ENCODE measurements at regions of chr4 and their contacts with region 1.

Region 1: DNA sequence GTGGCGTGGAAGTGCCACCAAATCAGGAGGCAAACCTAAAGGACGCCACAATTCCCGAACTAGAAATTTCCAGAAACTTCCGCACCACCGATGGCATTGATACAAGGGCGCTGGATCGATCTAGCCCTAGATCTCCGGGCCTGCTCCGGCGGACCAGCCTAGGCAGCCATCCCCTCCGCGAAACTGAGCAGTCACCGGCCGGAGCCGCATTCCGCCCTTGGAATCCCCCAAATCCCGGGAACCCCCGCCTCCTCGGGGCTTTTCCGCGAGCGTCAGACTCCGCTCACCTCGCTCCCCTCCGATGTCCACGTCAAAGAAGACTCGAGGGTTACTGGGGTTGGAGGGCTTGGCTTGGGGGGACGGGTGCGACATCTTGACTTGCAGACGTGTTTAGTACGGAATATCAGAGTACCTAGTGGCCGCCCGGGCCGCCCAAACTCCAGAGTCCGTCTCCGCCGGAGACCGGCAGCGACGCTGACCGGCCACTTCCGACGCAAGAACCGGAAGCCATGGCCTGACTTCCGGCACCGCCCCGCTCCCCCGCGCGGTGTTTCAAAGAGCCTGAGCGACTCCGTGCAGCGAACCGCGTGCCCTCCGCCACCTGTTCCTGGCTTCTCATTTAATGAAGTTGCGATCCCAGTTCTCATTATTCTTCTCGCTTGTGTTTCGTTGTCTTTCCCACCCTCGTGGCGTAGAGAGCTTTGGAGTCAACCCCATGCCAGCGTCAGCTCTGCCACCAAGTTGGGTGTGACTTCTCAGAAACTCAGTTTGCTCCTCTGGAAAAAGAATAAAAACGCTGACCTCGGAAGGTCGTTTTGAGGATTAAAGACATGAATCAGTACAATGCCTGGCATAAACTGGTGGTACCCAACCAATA is at the start of gene PPID:
- DNase-seq: peak; percentile 82
- H3K4me3 Mint-ChIP-seq: peak within 1 kb of the TSS; percentile 100
- H3K27ac Mint-ChIP-seq: peak within 1 kb of the TSS; percentile 97
- H3K4me1 Mint-ChIP-seq: peaks cover 7% of the 10 kb centered on the region
- H3K27me3 Mint-ChIP-seq: peaks cover 17% of the 10 kb centered on the region
- CTCF ChIP-seq: no peak
- total RNA-seq, gene PPID: 29.2 and 36.6 TPM in 2 replicates

Region 2: DNA sequence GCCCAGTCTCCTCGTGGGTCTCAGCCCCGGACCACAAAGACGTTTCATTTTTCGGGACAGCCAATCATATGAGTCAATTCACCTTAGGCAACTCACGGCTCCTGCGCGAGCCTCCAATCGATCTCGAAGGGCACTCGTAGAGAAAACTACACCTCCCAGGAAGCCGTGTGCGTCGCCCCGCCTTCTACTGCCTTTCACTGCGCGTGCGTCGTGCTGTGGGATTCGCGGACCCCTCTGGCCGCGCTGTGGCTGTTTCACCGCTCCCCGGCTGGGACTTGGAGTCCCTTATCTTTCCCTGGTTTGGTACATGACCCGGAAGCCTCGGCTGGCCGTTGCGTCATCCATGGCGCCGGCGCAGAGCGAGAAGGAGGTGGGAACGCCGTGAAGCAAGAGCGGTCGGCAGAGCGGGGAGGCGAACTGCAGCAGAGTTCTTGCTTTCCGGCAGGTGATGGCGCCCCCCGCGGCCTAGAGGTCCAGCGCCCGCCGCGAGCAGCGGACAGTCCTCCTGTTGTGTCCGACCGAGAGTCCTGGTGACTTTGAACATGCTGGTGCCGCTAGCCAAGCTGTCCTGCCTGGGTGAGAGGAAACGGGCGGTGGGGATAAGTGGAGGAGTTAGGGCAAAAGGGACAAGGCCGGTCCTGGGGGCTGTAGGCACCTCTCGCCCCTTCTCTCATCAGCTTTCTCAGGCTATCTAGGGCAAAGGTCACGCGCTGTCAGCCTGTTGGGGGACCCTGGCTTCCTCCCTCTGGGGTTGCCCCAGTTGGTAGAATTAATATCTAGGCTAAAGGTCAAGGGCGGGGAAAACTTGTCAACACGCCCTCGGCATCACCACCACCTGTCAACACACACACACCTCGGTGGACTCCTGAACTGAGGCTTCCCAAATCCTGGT is 51.0 kb before region 1 on chr4 and contains the start of gene ETFDH:
- CTCF ChIA-PET with region 1: no interaction called
- POLR2A ChIA-PET with region 1: no interaction called
- intact Hi-C with region 1: loop called (anchors 1 kb)
- DNase-seq: peak; percentile 99
- H3K4me3 Mint-ChIP-seq: peak within 1 kb of the TSS; percentile 95
- H3K27ac Mint-ChIP-seq: peak within 1 kb of the TSS; percentile 96
- H3K4me1 Mint-ChIP-seq: peaks cover 8% of the 10 kb centered on the region
- H3K27me3 Mint-ChIP-seq: no peaks in the 10 kb centered on the region
- CTCF ChIP-seq: peak; percentile 25
- total RNA-seq, gene ETFDH: 15.8 and 19.2 TPM in 2 replicates

Region 3: DNA sequence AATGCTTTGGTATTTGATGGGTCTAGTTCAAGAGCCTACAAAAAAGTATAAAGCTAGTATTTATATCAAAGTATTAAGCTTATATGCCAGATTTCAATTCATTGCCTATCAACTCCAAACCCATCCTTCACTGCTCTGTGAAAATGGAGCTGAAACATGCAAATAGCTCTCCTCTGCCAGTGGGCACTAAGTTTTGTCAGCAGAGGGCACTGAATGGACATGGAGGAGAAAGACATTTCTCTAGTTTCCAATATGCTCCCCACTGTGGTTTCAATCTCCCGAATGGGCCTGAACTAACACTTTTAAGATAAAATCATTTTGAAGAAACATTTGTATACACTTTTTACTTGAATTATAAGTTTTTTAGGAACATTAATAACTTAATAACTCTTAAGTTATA is 12.3 kb before region 1 on chr4:
- CTCF ChIA-PET with region 1: no interaction called
- POLR2A ChIA-PET with region 1: interaction called, 13 read pairs
- intact Hi-C with region 1: no loop called
- DNase-seq: no peak
- H3K4me3 Mint-ChIP-seq: no peak overlapping the region
- H3K27ac Mint-ChIP-seq: no peak overlapping the region
- H3K4me1 Mint-ChIP-seq: no peaks in the 10 kb centered on the region
- H3K27me3 Mint-ChIP-seq: no peaks in the 10 kb centered on the region
- CTCF ChIP-seq: no peak

Measured in MCF 10A (cell line).